K562 (cell line): ENCODE measurements at regions of chr2 and their contacts with region 1.

Region 1: GRCh38 chr2:9984217-9984739 is 32.8 kb downstream of the GRHL1 start:
- DNase-seq: peak; percentile 61 to 74 (median 64)
- ATAC-seq: peak; percentile 90
- H3K4me3 ChIP-seq: no peak overlapping the region
- H3K27ac ChIP-seq: no peak overlapping the region
- H3K4me1 ChIP-seq: peaks cover 7 to 8% of the 10 kb centered on the region in 2 experiments; a peak in 3 of 5 replicates
- H3K27me3 ChIP-seq: no peaks in the 10 kb centered on the region
- CTCF ChIP-seq: peak; percentile 54 to 78 (median 78); a peak in 5 of 6 replicates
- EP300 ChIP-seq: no peak
- POLR2A ChIP-seq: no peak
- RAD21 ChIP-seq: peak; percentile 68 to 71

Region 2: GRCh38 chr2:10028988-10029874 is 45.0 kb after region 1 on chr2:
- CTCF ChIA-PET with region 1: no interaction called
- POLR2A ChIA-PET with region 1: interaction called, 10 read pairs
- in situ Hi-C with region 1: no loop called
- intact Hi-C with region 1: no loop called
- DNase-seq: peak; percentile 90 to 94 (median 93)
- ATAC-seq: peak; percentile 91
- H3K4me3 ChIP-seq: peak overlapping the region; percentile 47
- H3K27ac ChIP-seq: peak overlapping the region; percentile 96
- H3K4me1 ChIP-seq: peaks cover 34 to 60% of the 10 kb centered on the region in 2 experiments
- H3K27me3 ChIP-seq: no peaks in the 10 kb centered on the region; a peak in 1 of 5 replicates
- CTCF ChIP-seq: no peak
- EP300 ChIP-seq: peak; percentile 56; the same call in 1 of the 2 replicates
- POLR2A ChIP-seq: peak; percentile 86
- RAD21 ChIP-seq: no peak

Region 3: GRCh38 chr2:10057231-10058107 is 73.2 kb after region 1 on chr2:
- CTCF ChIA-PET with region 1: no interaction called
- POLR2A ChIA-PET with region 1: no interaction called
- in situ Hi-C with region 1: no loop called
- intact Hi-C with region 1: loop called (anchors 2 kb)
- DNase-seq: peak; percentile 85 to 91 (median 89)
- ATAC-seq: peak; percentile 87
- H3K4me3 ChIP-seq: peak overlapping the region; percentile 40
- H3K27ac ChIP-seq: peak overlapping the region; percentile 42; the same call in 2 of the 3 replicates
- H3K4me1 ChIP-seq: peaks cover 11 to 50% of the 10 kb centered on the region in 2 experiments
- H3K27me3 ChIP-seq: no peaks in the 10 kb centered on the region
- CTCF ChIP-seq: no peak
- EP300 ChIP-seq: peak; percentile 45
- POLR2A ChIP-seq: peak; percentile 46; the same call in 1 of the 2 replicates
- RAD21 ChIP-seq: 0 out of 4 replicates have a peak, but pooled peaks of 1 of the 2 experiments have one; percentile 1